ENCODE measurements at regions of chr12 and their contacts with region 1.

Region 1: GRCh38 chr12:7060353-7060954 is at the start of gene C1S:
- DNase-seq: peak in 2 of 3 donors; percentile 34 to 43
- H3K4me3 ChIP-seq: no peak within 1 kb of the TSS
- H3K27ac ChIP-seq: no peak within 1 kb of the TSS
- H3K4me1 ChIP-seq: peaks cover 0 to 20% (median 6%) of the 10 kb centered on the region in 4 experiments
- H3K27me3 ChIP-seq: no peaks in the 10 kb centered on the region

Region 2: DNA sequence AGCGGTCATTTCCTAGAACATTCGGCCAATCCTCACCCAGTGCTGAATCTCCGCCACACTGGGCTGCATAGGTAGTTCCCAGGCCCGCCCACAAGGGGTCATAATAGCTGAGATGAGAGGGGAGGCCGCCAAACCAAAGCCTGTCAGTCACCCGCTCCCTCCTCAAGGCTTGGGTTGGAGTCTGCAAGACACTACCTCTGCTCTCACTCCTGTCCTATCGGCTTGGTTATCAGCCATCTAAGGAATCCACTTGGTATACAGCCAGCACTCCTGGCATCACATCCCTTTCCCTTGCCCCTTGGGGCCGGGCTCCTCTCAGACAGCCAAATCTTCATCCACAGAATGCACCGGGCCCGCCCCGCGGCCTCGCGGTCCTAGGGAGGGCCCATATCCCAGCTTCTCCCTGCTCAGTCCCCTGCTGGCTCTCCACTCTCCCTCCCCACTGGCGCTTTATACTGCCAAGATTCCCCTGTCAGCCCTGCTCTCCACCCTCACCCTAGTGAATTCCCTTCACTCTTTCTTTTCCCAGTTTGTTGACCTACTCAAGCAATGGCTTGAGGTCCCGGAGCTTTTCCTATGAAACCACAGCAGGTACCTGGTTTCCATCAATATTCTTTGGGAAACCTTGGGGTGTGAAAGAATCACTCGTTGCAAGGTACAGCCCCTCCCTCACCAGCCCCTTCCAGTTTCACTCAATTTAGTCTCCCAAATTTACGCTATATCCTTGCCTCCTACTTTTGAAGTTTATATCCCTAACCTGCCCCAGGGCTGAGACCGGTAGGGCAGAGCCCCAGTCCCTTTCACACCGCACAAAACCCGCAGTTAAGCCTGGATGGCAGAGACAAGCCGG is 506.1 kb before region 1 on chr12:
- CTCF ChIA-PET with region 1: no interaction called
- POLR2A ChIA-PET with region 1: no interaction called
- DNase-seq: peak; percentile 72 to 85 (median 85)
- H3K4me3 ChIP-seq: peak overlapping the region; percentile 0 to 94 (median 85)
- H3K27ac ChIP-seq: no peak overlapping the region
- H3K4me1 ChIP-seq: peaks cover 2 to 52% (median 35%) of the 10 kb centered on the region in 4 experiments
- H3K27me3 ChIP-seq: no peaks in the 10 kb centered on the region

Region 3: DNA sequence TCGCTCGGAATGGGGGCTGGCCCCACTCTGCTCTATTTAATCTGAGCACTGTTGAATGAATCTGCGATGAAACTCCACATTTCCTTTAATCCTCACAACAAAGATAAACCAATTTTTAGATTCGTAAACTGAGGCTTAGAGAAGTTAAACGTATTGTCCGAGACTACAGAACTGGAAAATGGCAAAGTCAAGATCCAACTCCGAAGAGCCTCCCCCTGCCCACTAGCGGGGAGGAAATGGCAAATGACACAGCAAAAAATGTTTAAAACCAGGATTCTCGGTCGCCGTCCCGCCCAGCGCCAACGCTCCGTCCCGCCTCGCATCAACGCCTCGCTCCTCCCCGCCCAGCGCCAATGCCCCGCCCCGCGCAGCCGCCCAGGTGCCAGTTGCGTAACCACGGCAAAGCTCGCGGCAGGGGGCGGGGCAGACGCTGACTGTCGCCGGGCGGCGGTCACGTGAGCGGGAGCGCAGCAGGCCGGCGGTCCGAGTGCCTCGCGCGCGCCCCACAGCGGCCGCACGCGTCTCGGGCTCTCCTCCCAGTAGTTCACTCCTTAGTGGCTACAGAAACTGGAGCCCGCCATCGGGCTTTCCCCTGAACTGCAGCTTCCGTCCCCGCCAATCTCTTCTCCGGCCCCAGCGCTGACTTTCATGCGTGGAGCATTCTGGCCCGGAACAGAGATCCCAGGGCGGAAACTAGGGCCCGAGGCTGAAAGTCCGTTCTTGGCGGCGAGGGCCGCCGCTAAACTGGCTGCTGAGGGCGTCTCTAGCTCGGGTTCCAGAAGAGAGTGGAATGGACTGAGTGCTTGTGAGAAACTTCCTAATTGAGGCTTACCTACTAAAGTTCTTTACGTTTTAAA is 169.4 kb before region 1 on chr12:
- CTCF ChIA-PET with region 1: no interaction called
- POLR2A ChIA-PET with region 1: no interaction called
- DNase-seq: peak; percentile 96 to 99 (median 98)
- H3K4me3 ChIP-seq: peak overlapping the region; percentile 50 to 87 (median 73)
- H3K27ac ChIP-seq: peak overlapping the region; percentile 81 to 93
- H3K4me1 ChIP-seq: peaks cover 6 to 18% (median 15%) of the 10 kb centered on the region in 4 experiments
- H3K27me3 ChIP-seq: no peaks in the 10 kb centered on the region

Region 4: GRCh38 chr12:6937481-6938297 is 122.8 kb before region 1 on chr12:
- CTCF ChIA-PET with region 1: no interaction called
- POLR2A ChIA-PET with region 1: no interaction called
- DNase-seq: peak; percentile 95 to 98 (median 98)
- H3K4me3 ChIP-seq: peak overlapping the region; percentile 15 to 87 (median 81)
- H3K27ac ChIP-seq: peak overlapping the region; percentile 74 to 86
- H3K4me1 ChIP-seq: peaks cover 0 to 32% (median 28%) of the 10 kb centered on the region in 4 experiments
- H3K27me3 ChIP-seq: no peaks in the 10 kb centered on the region

Region 5: GRCh38 chr12:7042842-7043241 is 17.6 kb before region 1 on chr12:
- CTCF ChIA-PET with region 1: interaction called, 20 read pairs
- POLR2A ChIA-PET with region 1: no interaction called
- DNase-seq: peak; percentile 31 to 50 (median 41)
- H3K4me3 ChIP-seq: no peak overlapping the region
- H3K27ac ChIP-seq: no peak overlapping the region
- H3K4me1 ChIP-seq: peaks cover 0 to 17% (median 15%) of the 10 kb centered on the region in 4 experiments
- H3K27me3 ChIP-seq: no peaks in the 10 kb centered on the region

Region 6: DNA sequence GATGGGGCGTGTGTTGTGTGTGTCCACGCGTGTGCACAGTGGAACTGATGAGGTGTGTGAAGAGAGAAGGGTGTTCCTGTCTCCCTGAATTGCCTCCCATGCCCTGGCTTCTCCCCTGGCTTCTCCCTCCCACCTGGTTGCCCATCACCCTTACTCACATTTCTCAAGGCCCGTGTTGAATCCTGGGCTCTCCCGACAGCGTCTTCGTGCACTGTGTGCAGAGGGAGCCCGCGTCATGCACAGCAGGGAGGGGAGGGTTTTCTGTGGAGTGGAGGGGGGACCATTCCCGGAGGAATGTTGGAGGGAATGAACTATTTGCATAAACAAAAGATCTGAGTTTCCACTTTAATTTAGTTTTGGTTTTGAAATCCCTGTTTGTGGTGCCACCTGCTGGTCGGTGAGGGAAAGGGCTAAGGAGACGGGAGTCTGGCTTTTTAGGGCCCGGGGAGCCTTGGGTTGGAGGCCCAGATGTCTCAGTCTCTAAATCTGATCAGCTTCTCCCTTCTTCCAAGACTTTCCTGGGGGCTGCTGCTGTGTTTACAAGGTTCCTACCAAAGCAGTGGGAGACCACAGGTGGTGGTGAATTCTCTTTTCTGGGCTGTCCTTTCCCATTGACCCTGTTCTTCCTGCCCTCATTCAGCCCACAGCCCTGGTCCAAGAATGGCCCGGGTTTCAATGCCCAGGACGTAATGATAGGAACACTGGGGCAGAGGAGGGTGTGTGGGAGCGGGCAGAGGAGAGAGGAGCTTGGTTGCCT is 32.0 kb after region 1 on chr12 and contains the start of gene C1R:
- CTCF ChIA-PET with region 1: interaction called, 11 read pairs
- POLR2A ChIA-PET with region 1: no interaction called
- DNase-seq: peak; percentile 61 to 78 (median 68)
- H3K4me3 ChIP-seq: peak within 1 kb of the TSS; percentile 19 to 89 (median 65)
- H3K27ac ChIP-seq: no peak within 1 kb of the TSS
- H3K4me1 ChIP-seq: peaks cover 0 to 12% (median 5%) of the 10 kb centered on the region in 4 experiments
- H3K27me3 ChIP-seq: no peaks in the 10 kb centered on the region

Region 7: GRCh38 chr12:7137908-7138307 is 77.5 kb after region 1 on chr12:
- CTCF ChIA-PET with region 1: no interaction called
- POLR2A ChIA-PET with region 1: no interaction called
- DNase-seq: no peak
- H3K4me3 ChIP-seq: no peak overlapping the region
- H3K27ac ChIP-seq: no peak overlapping the region
- H3K4me1 ChIP-seq: peaks cover 0 to under 1% (median 0%) of the 10 kb centered on the region in 4 experiments
- H3K27me3 ChIP-seq: no peaks in the 10 kb centered on the region

Measured in common myeloid progenitor, CD34-positive (primary cell).